AG04449 (cell line): ENCODE measurements at regions of chr7 and their contacts with region 1.

Region 1: DNA sequence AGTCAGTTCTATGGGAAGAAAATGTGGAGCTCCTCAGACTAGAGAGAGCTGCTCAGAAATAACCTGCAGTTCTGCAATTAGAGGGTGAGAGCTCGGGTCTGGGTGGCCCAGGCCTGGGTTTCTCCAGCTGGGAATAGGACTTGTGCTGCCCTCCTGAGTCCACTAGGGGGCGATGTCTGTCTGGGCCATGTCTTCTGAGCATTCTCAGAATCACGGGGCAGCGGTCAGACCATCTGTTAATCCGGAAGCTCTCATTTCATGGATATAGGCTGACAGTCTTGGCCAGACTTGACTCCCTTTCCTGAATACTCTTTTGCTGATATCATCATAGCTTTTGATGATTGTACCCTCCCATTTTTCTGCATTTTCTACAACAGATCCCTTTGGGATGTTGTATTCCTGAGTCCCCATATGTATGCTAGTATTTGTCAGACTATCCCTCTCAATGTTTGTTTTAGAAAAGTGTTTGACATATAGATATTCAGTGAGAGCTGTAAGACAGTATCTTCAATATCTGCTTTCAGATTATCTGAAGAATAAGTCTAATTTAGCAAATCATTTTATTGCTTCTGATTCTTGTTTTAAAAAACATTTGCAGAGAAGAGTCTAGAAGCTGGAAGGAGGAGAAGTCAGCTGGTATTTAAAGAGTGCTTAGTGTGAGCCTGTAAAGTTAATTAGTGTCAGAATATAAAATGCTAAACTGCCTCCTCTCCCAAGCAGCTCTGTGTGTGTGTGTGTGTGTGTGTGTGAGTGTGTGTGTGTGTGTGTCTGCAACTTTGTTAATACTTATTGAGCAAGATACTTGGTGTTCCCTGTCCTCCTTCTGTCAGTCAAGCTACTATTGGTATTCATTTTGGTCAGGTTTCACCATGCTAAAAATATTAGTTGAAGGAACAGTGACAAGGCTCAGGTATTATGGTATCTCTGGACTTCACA is 38.0 kb downstream of the STARD3NL start:
- DNase-seq: peak; percentile 67
- H3K4me3 ChIP-seq: no peak overlapping the region
- CTCF ChIP-seq: peak; percentile 92

Region 2: DNA sequence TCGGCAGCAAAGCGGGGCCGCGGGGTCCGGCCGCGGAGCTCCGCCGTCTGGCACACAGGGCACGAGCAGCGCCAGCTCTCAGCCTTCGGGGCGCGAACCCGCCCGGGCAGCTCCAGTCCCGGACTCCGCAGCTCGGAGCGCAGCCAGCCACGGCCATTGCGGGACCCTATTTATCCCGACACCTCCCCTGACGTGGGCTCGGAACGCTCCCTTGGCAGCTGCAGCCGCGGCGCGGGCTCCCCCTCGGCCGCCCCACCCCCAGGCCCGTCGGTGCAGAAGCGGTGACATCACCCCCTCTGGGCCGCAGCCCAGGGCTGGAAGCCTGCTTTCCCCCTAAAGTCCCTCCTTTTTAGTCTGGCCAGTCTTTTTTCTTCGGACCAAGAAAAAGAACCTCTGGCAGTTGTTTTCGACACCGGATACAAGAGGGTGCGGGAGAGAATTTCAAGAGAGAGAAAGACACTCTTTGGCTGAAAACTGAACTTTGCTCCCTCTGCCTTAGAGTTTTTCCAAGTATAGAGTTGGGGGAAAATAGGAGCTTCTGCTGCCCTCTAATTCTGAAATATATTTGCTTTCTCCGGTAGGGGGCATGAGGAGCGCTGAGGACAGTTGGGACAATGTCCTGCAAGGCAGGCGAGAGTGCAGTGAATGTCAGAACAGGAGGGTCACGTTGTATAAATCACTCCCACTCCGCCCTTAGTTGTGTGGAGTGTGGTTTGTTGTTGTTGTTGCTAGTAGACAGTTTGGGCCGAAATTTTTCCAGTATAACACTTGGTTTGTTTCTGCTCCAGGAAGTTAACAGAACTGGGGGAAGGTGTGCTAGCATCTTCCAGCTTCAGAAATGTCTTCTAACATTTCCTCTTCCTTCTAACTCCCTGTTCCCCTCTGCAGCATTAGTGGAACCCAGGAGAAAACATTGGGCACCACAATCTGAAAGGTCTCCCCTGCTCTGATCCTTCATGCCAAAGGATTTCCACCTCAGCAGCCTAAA is 299.0 kb before region 1 on chr7 and contains the start of gene SFRP4:
- CTCF ChIA-PET with region 1: interaction called, 14 read pairs
- POLR2A ChIA-PET with region 1: no interaction called
- DNase-seq: no peak
- H3K4me3 ChIP-seq: peak within 1 kb of the TSS; percentile 55
- CTCF ChIP-seq: peak; percentile 63

Region 3: GRCh38 chr7:38178004-38178694 is 37.9 kb before region 1 on chr7 and contains the start of gene STARD3NL:
- CTCF ChIA-PET with region 1: interaction called, 31 read pairs
- POLR2A ChIA-PET with region 1: interaction called, 5 read pairs
- DNase-seq: peak; percentile 100
- H3K4me3 ChIP-seq: peak within 1 kb of the TSS; percentile 85
- CTCF ChIP-seq: no peak

Region 4: DNA sequence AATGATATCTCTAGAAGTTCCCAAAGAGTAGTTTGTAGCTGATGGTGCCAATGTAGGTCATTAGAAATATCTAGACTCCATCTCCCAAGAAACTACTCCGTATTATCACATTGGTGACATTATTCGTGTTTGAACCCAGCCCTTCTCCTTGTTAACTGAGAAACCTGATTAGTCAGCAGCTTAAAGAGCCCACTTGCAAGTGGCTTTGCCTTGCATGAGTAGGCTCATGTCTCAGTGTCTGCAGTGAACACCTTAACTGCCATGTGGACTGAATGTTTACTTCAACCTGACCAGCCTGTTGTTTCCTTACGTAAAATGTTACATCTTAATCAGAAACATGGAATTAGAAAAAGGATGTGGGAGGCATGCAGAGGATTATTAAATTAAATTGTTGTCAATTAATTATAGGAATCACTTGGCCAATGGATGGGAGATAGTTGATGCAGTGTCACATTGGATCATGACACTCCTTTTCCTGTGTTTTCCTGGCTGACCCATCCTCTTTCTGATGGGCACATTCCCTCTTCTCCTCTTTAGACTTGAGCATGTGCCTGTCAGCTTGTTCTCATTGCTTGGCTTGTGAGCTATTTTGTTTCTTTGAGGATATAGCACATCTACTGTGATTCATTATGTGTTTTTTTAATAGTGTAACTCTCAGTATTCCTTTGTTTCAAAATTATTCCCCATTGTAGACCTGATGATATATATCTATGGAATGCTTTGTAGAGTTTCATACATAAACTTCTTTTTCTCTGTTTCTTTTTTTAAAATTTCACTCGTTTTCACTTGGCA is 20.0 kb before region 1 on chr7:
- CTCF ChIA-PET with region 1: interaction called, 140 read pairs
- POLR2A ChIA-PET with region 1: interaction called, 4 read pairs
- DNase-seq: no peak
- H3K4me3 ChIP-seq: no peak overlapping the region
- CTCF ChIP-seq: no peak

Region 5: GRCh38 chr7:38280707-38281106 is 64.7 kb after region 1 on chr7:
- CTCF ChIA-PET with region 1: no interaction called
- POLR2A ChIA-PET with region 1: no interaction called
- DNase-seq: no peak
- H3K4me3 ChIP-seq: no peak overlapping the region
- CTCF ChIP-seq: no peak

Region 6: GRCh38 chr7:38318803-38319416 is 102.9 kb after region 1 on chr7:
- CTCF ChIA-PET with region 1: interaction called, 265 read pairs
- POLR2A ChIA-PET with region 1: no interaction called
- DNase-seq: peak; percentile 53
- H3K4me3 ChIP-seq: no peak overlapping the region
- CTCF ChIP-seq: peak; percentile 74

Region 7: GRCh38 chr7:38351601-38352000 is 135.6 kb after region 1 on chr7:
- CTCF ChIA-PET with region 1: interaction called, 22 read pairs
- POLR2A ChIA-PET with region 1: no interaction called
- DNase-seq: no peak
- H3K4me3 ChIP-seq: no peak overlapping the region
- CTCF ChIP-seq: no peak

Region 8: DNA sequence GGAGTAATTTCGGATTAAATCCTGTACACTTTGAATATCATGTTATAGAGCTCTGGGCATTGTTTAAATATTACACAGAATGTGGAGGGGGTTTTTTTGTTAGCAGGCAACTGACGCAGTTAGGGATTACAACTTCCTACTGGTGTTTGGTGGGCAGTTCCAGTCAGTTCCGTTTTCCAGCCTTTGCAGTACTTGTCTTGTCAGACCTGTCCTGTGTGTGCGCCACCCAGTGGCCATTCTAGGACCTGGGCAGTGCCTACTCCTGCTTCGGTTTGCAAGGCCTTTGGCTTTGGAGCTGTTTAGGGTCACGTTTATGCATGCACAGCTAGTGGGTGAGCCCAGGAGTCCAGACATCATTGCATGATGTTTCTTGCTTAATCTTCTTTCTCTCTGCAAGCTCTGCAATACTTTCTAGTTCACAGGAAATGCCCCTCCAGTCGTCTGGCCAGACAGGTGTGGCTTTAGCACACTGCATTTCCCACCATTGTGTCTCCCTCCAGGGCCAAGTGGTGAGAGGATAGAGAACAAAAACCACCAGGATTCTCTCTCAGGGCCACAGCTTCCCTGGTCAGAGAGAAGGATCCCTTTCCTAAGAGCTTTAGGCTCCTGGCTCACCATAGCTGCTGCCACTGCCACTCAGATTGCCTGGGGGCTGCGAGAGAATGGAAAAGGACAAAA is 154.0 kb after region 1 on chr7:
- CTCF ChIA-PET with region 1: interaction called, 66 read pairs
- POLR2A ChIA-PET with region 1: no interaction called
- DNase-seq: peak; percentile 40
- H3K4me3 ChIP-seq: no peak overlapping the region
- CTCF ChIP-seq: peak; percentile 89